Endothelial cell of umbilical vein (primary cell): ENCODE measurements at regions of chr2 and their contacts with region 1.

Region 1: DNA sequence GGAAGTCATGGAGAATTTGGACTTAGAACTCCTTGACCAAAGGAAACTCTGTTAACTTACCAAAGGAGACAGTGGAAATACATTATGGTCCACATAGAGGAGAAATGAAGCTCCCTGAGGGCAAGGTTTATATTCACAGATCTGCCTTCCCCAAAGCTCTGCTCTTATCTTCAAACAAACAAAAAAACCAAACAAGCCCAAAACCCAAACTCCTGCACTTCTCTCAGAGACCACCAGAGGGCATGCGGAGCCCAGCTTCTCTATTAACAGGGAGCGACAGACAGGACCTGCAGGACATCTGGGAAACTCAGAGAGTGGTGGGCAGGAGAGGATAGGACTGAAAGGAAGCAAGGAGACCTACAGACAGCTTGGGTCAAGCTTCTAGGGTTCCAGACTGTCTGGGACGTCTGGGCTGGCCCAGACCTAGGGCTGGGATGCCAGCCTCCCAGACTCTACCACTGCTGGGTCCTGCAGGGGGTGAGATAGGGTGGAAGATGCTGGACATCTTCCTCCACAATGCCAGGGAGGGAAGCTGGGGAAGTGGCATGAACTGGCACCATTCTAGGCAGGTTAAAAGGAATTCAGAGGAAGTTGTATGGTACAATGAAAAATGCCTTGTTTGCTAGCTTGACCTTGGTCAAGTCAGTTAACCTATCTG is 4.0 kb upstream of the WNT10A start:
- DNase-seq: peak; percentile 74
- H3K4me3 ChIP-seq: no peak overlapping the region
- H3K27ac ChIP-seq: no peak overlapping the region
- H3K4me1 ChIP-seq: no peaks in the 10 kb centered on the region
- H3K27me3 ChIP-seq: peaks cover 76 to 86% of the 10 kb centered on the region in 2 experiments
- CTCF ChIP-seq: peak; percentile 89 to 90
- POLR2A ChIP-seq: no peak

Region 2: DNA sequence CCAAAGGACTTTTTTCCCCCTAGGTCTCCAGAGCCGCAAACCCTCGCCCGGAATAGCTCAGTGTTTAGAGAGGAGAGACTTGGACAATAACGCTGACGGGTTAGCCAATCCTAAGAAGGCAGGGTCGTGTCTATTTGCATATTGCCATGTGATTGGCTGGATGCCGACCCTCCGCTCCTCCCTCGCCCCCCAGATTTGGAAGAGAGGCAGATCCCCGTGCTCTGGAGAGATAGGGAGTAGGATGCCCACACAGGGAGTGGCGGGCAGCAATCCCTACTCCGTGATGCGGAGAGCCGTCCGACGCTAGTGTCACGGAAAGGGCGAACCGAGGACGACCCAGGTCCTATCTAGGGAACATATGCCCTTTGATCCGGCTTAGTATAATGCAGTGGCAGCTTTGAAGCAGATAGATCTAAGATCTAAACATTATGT is 15.7 kb before region 1 on chr2:
- CTCF ChIA-PET with region 1: interaction called, 21 read pairs
- POLR2A ChIA-PET with region 1: no interaction called
- dilution Hi-C with region 1: no loop called
- intact Hi-C with region 1: no loop called
- DNase-seq: peak; percentile 22
- H3K4me3 ChIP-seq: no peak overlapping the region
- H3K27ac ChIP-seq: no peak overlapping the region
- H3K4me1 ChIP-seq: no peaks in the 10 kb centered on the region
- H3K27me3 ChIP-seq: peaks cover 54 to 56% of the 10 kb centered on the region in 2 experiments
- CTCF ChIP-seq: no peak
- POLR2A ChIP-seq: no peak

Region 3: DNA sequence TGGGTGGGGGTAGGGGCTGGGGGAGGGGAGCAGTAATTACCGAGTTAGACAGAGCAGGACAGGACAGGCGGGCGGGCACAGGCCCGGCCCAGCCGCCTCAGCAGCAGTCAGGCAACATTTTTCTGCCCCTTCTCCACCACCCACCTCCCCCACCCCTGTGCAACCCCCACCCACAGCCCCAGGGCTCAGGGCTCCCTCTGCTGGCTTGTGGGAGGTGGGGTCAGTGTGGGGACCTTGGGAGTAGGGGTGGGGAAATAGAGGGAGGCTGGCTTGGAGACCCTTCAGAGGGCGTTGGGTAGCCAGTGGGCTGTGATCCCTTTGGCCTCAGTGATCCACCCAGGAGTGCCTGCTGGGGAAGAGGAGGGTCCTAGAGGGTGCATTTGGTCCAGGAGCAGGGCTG is 10.7 kb before region 1 on chr2:
- CTCF ChIA-PET with region 1: interaction called, 21 read pairs
- POLR2A ChIA-PET with region 1: no interaction called
- dilution Hi-C with region 1: no loop called
- intact Hi-C with region 1: no loop called
- DNase-seq: no peak
- H3K4me3 ChIP-seq: no peak overlapping the region
- H3K27ac ChIP-seq: no peak overlapping the region
- H3K4me1 ChIP-seq: no peaks in the 10 kb centered on the region
- H3K27me3 ChIP-seq: peaks cover 42 to 54% of the 10 kb centered on the region in 2 experiments
- CTCF ChIP-seq: no peak
- POLR2A ChIP-seq: no peak

Region 4: DNA sequence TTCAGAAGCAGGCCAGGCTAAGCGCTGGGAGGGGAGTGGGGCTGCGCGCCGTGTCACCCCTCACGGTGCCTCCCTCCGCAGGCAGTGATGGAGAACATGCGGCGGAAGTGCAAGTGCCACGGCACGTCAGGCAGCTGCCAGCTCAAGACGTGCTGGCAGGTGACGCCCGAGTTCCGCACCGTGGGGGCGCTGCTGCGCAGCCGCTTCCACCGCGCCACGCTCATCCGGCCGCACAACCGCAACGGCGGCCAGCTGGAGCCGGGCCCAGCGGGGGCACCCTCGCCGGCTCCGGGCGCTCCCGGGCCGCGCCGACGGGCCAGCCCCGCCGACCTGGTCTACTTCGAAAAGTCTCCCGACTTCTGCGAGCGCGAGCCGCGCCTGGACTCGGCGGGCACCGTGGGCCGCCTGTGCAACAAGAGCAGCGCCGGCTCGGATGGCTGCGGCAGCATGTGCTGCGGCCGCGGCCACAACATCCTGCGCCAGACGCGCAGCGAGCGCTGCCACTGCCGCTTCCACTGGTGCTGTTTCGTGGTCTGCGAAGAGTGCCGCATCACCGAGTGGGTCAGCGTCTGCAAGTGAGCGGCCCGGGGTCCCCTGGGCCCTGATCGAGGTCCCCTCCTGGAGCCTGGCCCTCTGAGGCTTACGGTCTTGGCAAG is 16.1 kb after region 1 on chr2:
- CTCF ChIA-PET with region 1: interaction called, 362 read pairs
- POLR2A ChIA-PET with region 1: no interaction called
- dilution Hi-C with region 1: no loop called
- intact Hi-C with region 1: loop called (anchors 1 kb)
- DNase-seq: peak; percentile 57
- H3K4me3 ChIP-seq: no peak overlapping the region
- H3K27ac ChIP-seq: no peak overlapping the region
- H3K4me1 ChIP-seq: no peaks in the 10 kb centered on the region
- H3K27me3 ChIP-seq: peaks cover 73 to 78% of the 10 kb centered on the region in 2 experiments
- CTCF ChIP-seq: peak; percentile 44 to 58
- POLR2A ChIP-seq: no peak

Region 5: DNA sequence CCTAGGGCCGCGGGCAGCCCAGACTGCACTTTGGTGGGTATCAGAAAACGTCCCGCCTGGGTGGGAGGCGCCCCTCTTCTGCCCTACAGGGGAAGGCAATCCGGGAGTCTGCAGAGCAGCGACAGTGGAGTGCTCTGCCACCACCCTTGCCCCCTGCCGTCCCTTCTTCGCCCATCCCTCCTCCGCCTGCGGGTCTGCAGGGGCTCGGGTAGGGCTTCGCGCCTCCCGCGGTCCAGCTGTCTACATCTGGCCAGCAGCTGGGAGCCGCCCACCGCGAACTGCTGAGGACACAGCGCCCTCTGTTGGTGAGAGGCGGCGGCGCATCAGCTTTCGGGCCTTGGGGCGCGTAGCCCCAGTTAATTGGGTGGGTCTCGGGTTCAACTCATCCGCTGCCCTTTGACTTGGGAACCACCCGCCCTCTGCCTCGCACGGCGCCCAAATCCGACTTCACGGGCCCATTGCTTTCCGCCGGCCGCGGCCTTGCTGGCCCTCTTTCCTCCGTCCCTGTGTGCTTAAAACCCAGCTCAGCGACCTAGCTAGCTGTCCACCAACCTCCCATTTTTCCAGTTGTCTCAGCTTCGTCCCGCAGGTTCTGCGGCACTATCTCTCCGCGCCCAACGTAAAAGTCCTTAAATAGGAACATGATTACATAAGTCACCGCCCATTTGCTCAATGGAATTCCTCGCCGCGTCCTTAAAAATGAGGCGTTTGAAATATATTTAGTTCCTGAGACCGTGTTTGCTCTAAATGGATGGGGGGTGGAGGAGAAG is 21.6 kb after region 1 on chr2:
- CTCF ChIA-PET with region 1: interaction called, 362 read pairs
- POLR2A ChIA-PET with region 1: no interaction called
- dilution Hi-C with region 1: no loop called
- intact Hi-C with region 1: loop called (anchors 1 kb)
- DNase-seq: peak; percentile 35
- H3K4me3 ChIP-seq: no peak overlapping the region
- H3K27ac ChIP-seq: no peak overlapping the region
- H3K4me1 ChIP-seq: no peaks in the 10 kb centered on the region
- H3K27me3 ChIP-seq: peaks cover 66 to 77% of the 10 kb centered on the region in 2 experiments
- CTCF ChIP-seq: peak; percentile 93 to 98
- POLR2A ChIP-seq: no peak

Region 6: GRCh38 chr2:218908721-218909619 is 32.3 kb after region 1 on chr2:
- CTCF ChIA-PET with region 1: interaction called, 18 read pairs
- POLR2A ChIA-PET with region 1: no interaction called
- dilution Hi-C with region 1: no loop called
- intact Hi-C with region 1: no loop called
- DNase-seq: peak; percentile 56
- H3K4me3 ChIP-seq: peak overlapping the region; percentile 13 to 47 (median 22)
- H3K27ac ChIP-seq: no peak overlapping the region
- H3K4me1 ChIP-seq: peaks cover 11% of the 10 kb centered on the region
- H3K27me3 ChIP-seq: peaks cover 11 to 12% of the 10 kb centered on the region in 2 experiments
- CTCF ChIP-seq: no peak
- POLR2A ChIP-seq: no peak

Region 7: GRCh38 chr2:219104107-219105035 is 227.7 kb after region 1 on chr2:
- CTCF ChIA-PET with region 1: no interaction called
- POLR2A ChIA-PET with region 1: no interaction called
- dilution Hi-C with region 1: no loop called
- intact Hi-C with region 1: no loop called
- DNase-seq: peak; percentile 35
- H3K4me3 ChIP-seq: no peak overlapping the region
- H3K27ac ChIP-seq: no peak overlapping the region
- H3K4me1 ChIP-seq: no peaks in the 10 kb centered on the region
- H3K27me3 ChIP-seq: no peaks in the 10 kb centered on the region
- CTCF ChIP-seq: peak; percentile 84 to 86
- POLR2A ChIP-seq: no peak